Dendritic cell treated with granulocyte-macrophage colony-stimulating factor and Interleukin-4, amounts not matched to agents 40 ng/mL and 50 ng/mL, for 4 days (primary cell): ENCODE measurements at regions of chr17 and their contacts with region 1.

Region 1: DNA sequence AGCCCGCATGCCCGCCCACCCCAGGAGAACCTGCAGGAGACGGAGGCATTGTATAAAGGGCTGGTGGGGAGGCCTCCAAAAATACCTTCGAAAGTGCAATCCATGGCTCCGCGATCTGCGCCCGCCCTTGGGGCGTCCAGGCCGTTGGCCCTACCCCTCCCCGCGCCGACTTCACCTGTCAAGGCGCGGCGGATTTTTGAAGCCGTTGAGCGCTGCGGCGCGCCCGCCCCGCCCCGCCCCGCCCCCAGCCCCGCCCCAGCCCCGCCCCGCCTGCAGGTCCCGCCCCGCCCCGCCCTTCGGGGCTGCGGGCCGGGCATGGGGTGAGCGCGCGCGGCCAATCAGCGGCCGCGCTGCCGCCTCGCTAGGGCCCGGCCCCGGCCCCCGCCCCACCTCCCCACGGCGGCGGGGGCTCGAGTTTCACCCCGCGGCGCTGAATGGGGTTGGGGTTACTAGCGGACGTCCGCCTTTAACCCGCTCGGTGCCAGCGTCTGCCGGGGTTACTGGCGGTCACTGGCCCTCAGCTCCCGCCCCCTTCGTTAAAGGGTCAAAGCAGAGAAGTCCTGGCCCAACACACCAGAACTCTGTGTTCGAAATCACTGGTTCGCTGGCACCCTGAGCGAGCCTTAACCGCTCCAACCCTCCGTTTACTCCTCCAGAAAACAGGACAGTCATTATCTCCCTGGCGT is 13.2 kb downstream of the SREBF1 start:
- H3K4me3 Mint-ChIP-seq: peak overlapping the region; percentile 67
- H3K27ac Mint-ChIP-seq: peak overlapping the region; percentile 74
- H3K4me1 Mint-ChIP-seq: peaks cover 91% of the 10 kb centered on the region
- H3K27me3 Mint-ChIP-seq: no peaks in the 10 kb centered on the region

Region 2: DNA sequence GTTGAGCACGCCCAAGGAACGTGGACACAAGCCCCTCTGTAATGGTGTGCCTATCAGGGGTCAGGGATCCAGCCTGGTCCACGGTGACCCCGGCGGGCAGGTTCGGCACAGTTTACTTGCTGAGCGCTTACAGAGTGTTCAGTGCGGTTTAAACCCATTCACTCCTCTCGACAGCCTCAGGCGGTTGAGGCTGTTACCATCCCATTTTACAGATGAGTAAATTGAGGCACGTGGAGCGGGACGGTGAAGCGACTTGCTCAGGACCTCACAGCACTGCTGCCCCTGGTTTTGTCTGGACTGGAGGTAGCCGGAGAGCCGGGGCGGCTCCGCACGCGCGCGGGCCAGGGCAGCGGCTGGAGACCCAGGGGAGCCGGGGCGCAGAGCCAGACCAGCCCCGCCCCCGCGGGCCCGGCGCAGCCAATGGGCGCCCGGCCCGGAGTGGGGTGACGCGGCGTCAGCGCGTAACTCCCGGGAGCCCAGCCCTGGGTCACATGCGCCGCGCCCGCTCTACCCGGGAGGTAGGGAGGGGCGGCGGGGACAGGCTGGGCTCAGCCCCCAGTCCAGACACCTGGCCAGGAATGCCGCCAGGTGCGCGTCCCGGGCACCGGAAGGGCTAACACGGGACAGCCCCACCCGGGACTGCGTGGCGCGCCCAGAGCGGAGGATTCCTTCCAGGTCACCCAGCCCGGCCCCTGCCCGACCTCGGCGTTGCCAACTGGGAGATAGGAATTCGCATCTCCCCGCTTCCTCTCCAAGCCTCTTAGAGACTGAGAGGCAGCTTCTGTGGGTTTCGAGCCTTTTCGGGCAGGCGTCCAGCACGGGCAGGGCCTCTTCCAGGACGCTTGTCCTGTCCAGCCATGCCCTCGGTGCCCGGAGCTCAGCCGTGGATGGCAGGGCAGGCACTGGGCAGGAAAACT is 16.5 kb after region 1 on chr17:
- intact Hi-C with region 1: loop called (anchors 2 kb)
- H3K4me3 Mint-ChIP-seq: peak overlapping the region; percentile 79
- H3K27ac Mint-ChIP-seq: peak overlapping the region; percentile 97
- H3K4me1 Mint-ChIP-seq: peaks cover 66% of the 10 kb centered on the region
- H3K27me3 Mint-ChIP-seq: no peaks in the 10 kb centered on the region

Region 3: GRCh38 chr17:18038861-18039534 is 215.4 kb after region 1 on chr17 and contains the starts of genes ATPAF2 and GID4:
- intact Hi-C with region 1: loop called (anchors 10 kb)
- H3K4me3 Mint-ChIP-seq: peak within 1 kb of the TSS; percentile 81
- H3K27ac Mint-ChIP-seq: peak within 1 kb of the TSS; percentile 78
- H3K4me1 Mint-ChIP-seq: peaks cover 55% of the 10 kb centered on the region
- H3K27me3 Mint-ChIP-seq: no peaks in the 10 kb centered on the region